Left ventricle myocardium superior (tissue), 1 donor: ENCODE measurements at regions of chr2 and their contacts with region 1.

Region 1: DNA sequence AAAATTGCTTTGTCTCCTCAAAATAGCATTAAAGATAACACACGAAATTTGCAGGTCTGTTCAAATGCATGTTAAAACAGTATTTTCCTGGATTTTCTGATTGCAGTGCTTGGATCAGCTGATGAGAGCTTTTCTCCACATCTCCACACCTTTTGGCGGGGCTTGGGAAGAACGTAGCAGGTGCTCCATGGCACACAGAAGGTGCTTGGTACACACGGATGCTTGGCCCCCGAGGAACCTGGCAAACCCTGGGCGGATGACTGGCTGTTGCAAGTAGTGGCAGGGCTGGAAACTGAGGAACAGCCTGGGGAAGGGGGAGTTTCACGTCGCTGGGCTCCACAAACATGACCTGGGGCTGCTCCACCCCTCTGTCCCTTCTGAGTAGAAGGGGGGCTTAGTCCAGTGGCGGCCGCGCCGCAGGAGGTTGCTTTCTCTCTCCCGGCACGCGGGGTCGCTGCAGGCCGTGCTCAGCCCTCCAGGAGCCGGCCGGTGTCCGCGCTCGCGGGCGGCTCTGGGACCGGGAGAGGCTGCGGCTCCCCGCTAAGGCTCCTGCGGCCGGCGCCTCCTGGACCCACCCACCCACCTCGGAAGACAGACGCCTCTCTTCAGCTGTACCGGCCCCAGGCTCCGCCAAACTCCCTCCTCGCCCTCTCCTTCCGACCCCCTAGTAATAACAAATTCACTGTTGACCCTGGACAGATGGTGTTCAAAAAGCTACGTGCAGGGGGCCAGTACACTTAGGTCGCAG is 69.3 kb downstream of the MARCO start:
- DNase-seq: peak; percentile 72
- ATAC-seq: peak; percentile 96

Region 2: DNA sequence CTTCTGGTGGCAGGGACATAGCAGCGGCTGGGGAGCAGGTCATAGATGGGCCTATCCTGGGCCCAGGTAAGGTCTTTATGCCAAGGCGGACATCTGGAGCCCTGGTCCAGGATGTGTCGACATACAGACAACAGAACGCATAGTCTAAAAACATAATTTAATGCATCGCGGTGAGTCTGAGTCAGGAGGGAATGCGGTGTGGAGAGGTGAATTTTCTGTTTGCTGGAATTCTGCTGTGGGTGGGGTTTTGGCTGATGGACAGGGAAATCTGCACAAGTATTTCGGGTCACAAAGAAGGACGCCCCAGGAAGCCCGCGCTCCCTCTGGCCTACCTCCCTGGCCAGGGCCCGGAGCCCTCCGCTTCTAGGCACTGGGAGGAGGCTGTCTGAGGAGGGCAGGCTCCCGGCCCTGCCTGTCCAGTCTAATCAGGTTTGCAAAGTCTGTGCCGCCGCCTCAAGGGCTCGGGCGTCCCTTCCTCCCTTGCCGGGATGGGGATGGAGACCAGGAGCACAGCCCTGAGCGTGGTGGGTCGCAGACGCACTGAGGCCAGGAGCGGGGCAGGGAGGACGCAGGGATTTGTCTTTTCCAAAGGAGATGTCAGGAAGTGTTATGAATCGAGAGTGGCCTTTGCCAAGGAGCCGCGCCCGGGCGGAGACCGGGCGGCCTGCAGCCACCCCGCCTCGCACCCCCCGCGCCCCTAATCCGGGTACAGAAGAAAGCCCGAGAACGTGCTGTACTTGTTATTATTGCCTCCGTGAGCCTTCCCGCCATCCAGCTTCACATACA is 145.0 kb after region 1 on chr2:
- intact Hi-C with region 1: no loop called
- DNase-seq: no peak
- ATAC-seq: no peak

Region 3: DNA sequence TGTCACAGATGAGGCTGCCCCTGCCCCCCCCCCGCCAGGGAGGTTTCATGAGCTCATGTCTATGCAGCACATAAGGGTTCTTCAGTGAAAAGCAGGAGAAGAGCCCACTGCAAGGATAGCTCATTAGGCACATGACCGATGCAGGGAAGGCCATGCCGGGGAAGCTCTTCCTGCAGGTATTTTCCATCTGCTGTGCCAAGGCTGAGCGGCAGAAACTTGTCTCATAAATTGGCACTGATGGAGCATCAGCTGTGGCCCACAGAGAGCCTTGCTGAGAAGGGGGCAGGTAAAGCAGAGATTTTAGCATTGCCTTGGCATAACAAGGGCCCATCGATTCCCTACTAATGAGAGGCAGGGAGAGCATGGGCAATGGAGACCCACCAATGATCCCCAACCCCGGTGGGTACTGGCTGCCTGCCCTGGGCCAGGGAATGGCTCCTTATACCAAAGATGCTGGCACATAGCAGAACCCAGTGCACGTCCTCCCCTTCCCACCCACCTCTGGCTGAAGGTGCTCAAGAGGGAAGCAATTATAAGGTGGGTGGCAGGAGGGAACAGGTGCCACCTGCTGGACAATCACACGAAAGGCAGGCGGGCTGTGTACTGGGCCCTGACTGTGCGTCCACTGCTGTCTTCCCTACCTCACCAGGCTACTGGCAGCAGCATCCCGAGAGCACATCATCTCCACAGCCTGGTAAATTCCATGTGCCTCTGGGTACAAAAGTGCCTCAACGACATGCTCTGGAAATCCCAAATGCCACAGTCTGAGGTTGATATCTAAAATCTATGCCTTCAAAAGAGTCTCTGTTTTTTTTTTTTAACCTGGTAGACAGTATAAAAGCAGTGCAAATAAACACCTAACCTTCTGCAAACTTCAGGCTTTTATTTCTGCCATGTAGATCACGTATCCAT is 253.7 kb after region 1 on chr2:
- intact Hi-C with region 1: loop called (anchors 10 kb)
- DNase-seq: peak; percentile 55
- ATAC-seq: peak; percentile 89